Motor neuron (in vitro differentiated cells): ENCODE measurements at regions of chr6 and their contacts with region 1.

Region 1: GRCh38 chr6:157314705-157315321 is 8.5 kb downstream of the TMEM242 start:
- ATAC-seq: peak; percentile 54 to 94 (median 70)
- H3K4me3 ChIP-seq: no peak overlapping the region
- H3K27ac ChIP-seq: no peak overlapping the region
- H3K4me1 ChIP-seq: no peaks in the 10 kb centered on the region

Region 2: DNA sequence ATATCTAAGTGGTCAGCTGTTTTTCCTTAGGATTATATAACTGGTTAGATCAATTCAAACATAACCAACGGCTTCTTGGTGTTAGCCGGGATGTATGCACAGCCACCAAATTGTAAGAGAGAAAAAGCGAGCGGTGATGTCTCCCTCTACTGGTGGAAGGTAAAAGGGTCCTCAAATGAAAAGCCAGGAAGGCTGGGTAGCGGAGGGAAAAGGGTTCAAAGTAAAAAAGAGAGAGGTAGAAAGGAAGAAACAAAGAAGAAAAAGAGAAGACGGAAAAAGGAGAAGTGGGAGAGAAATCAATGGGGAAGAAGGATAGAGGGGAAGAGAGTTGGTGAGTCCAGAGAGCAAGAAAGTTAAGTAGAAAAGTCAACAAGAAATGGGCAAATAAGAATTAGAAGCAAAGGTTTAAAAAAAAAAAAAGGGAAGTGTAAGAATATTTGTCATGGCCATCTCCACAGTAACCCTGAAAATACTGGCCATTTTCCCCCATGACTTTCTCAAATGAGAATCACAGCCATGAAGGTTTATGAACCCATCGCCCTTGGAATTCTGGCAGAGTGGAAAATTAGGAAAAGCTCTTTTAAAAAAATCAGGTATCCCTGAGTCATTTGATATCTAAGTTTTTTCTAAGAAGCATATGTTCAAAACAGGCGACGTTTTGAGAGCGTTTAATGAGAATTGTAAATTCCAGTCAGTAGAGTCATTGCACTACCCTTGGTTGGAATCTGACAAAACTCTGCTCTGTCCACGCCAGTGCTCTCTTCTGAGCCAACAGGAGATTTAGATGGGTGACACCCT is 352.6 kb after region 1 on chr6:
- in situ Hi-C with region 1: loop called in 1 of 9 experiments (anchors 10 kb)
- ATAC-seq: peak in 6 of 8 experiments; percentile 13 to 46 (median 19)
- H3K4me3 ChIP-seq: peak overlapping the region in 1 of 5 donors; percentile 3
- H3K27ac ChIP-seq: no peak overlapping the region
- H3K4me1 ChIP-seq: peaks cover 12 to 21% of the 10 kb centered on the region in 2 donors